HEK293 (cell line): ENCODE measurements at regions of chr7 and their contacts with region 1.

Region 1: DNA sequence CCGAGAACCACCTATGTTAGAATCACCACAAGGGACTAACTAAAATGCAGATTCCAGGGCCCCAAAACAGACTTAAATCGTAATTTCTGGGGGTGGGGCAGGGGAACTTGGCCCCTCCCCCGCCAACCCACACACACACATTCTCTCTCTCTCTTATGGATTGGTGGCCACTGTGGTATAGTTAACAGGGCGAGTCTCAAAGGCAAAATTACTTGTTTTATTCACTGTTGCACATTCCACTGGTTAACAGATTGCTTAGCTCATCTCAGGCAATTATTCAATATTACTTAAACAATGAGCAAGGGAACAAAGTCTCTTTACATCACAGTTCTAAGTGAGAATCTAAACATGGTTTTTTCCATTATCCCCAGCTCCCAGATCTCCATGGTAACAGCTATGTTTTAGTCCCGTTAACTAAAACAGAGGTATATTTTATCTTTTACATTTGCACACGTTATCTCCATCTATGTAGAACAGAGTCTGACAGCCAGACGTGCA is 38.5 kb downstream of the IGF2BP3 start:
- H3K4me3 ChIP-seq: no peak overlapping the region
- H3K27ac ChIP-seq: no peak overlapping the region; the same call in 1 of the 2 replicates
- H3K4me1 ChIP-seq: peaks cover 26% of the 10 kb centered on the region
- CTCF ChIP-seq: no peak

Region 2: GRCh38 chr7:22822486-22823141 is 609.1 kb before region 1 on chr7 and contains the start of gene TOMM7:
- CTCF ChIA-PET with region 1: no interaction called
- POLR2A ChIA-PET with region 1: no interaction called
- H3K4me3 ChIP-seq: peak within 1 kb of the TSS; percentile 60
- H3K27ac ChIP-seq: peak within 1 kb of the TSS; percentile 47; the same call in 1 of the 2 replicates
- H3K4me1 ChIP-seq: no peaks in the 10 kb centered on the region
- CTCF ChIP-seq: peak; percentile 72

Region 3: GRCh38 chr7:23335621-23336020 is 96.1 kb before region 1 on chr7:
- CTCF ChIA-PET with region 1: interaction called, 11 read pairs
- POLR2A ChIA-PET with region 1: no interaction called
- H3K4me3 ChIP-seq: no peak overlapping the region
- H3K27ac ChIP-seq: peak overlapping the region; percentile 64
- H3K4me1 ChIP-seq: peaks cover 36% of the 10 kb centered on the region
- CTCF ChIP-seq: no peak

Region 4: DNA sequence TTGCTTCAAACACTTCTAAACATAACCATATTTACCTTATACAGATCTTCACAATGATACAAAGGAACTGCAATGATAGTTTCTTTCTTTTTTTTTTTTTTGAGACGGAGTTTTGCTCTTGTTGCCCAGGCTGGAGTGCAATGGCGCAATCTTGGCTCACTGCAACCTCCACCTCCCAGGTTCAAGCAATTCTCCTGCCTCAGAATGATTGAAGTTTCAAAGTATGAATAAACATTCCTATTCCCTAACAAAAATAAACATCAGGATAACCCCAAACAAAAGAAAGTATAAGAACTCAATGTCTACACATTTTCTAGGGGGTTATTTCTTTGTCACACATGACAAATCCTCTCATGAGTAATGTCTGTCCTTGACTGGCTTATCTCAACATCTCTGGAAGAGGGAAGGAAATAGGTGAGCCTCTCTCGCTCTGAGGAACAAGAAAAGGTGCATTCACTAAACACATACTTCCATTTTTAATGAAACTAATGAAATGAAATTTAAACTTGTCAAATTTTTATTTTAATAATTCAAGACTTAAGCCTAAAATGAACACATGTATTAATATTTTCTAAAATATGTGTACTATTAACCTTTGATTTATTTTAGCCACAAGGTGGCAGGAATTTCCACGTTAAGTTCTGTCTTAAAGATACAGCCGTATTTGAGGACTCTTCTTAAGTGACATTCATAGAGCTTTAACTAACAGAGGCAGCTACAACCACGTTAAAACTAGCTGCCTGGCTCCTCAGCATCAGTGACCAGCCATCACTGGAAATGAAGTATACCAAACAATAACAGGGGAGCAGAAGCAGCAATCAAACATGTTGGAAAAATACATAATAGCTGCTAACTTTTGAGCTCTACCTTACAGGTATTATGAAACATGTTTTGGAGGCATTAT is 74.3 kb before region 1 on chr7:
- CTCF ChIA-PET with region 1: interaction called, 13 read pairs
- POLR2A ChIA-PET with region 1: no interaction called
- H3K4me3 ChIP-seq: no peak overlapping the region
- H3K27ac ChIP-seq: peak overlapping the region; percentile 54
- H3K4me1 ChIP-seq: peaks cover 27% of the 10 kb centered on the region
- CTCF ChIP-seq: no peak

Region 5: GRCh38 chr7:23394488-23395171 is 37.1 kb before region 1 on chr7:
- CTCF ChIA-PET with region 1: no interaction called
- POLR2A ChIA-PET with region 1: no interaction called
- H3K4me3 ChIP-seq: no peak overlapping the region
- H3K27ac ChIP-seq: 0 out of 2 replicates have a peak overlapping the region, but pooled peaks have one; percentile 11
- H3K4me1 ChIP-seq: peaks cover 10% of the 10 kb centered on the region
- CTCF ChIP-seq: no peak

Region 6: GRCh38 chr7:23419845-23420244 is 11.9 kb before region 1 on chr7:
- CTCF ChIA-PET with region 1: interaction called, 12 read pairs
- POLR2A ChIA-PET with region 1: no interaction called
- H3K4me3 ChIP-seq: no peak overlapping the region
- H3K27ac ChIP-seq: no peak overlapping the region
- H3K4me1 ChIP-seq: peaks cover 29% of the 10 kb centered on the region
- CTCF ChIP-seq: no peak

Region 7: DNA sequence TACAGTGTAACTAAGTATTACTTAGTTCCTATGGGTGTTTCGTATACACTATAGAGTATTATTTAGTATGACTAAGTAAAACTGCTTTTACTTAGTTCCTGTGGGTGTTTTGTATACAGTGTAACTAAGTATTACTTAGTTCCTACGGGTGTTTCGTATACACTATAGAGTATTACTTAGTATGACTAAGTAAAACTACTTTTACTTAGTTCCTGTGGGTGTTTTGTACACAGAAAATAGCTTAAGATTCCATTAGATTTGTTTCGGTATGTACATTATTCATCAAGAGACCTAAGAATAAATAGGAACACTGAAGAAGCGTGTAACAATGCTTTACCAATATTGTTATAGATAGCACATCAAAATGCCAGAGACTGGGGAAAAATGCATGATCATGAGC is 13.6 kb after region 1 on chr7:
- CTCF ChIA-PET with region 1: interaction called, 15 read pairs
- POLR2A ChIA-PET with region 1: no interaction called
- H3K4me3 ChIP-seq: no peak overlapping the region
- H3K27ac ChIP-seq: no peak overlapping the region
- H3K4me1 ChIP-seq: peaks cover 9% of the 10 kb centered on the region
- CTCF ChIP-seq: no peak

Region 8: DNA sequence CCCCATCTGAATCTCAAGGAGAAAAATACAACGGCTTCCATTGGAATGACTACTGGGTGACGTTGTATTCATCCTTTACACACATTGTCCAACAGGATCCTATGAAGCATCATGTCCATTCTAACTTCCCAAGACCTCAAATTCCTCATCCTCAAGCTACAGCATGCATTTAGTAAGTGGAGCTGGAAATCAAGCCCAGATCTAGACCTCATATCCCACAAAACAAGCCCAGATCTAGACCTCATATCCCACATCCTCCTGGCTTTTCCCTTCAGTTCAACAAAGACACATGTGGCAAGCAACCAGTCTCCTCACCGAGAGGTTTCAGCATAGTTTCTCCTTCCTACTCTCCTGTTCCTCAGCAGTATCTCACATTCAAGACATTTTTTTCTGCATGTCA is 26.3 kb after region 1 on chr7:
- CTCF ChIA-PET with region 1: interaction called, 12 read pairs
- POLR2A ChIA-PET with region 1: no interaction called
- H3K4me3 ChIP-seq: no peak overlapping the region
- H3K27ac ChIP-seq: no peak overlapping the region
- H3K4me1 ChIP-seq: peaks cover 9% of the 10 kb centered on the region
- CTCF ChIP-seq: no peak

Region 9: GRCh38 chr7:23811540-23811939 is 379.8 kb after region 1 on chr7:
- CTCF ChIA-PET with region 1: no interaction called
- POLR2A ChIA-PET with region 1: no interaction called
- H3K4me3 ChIP-seq: no peak overlapping the region
- H3K27ac ChIP-seq: no peak overlapping the region
- H3K4me1 ChIP-seq: no peaks in the 10 kb centered on the region
- CTCF ChIP-seq: no peak

Region 10: DNA sequence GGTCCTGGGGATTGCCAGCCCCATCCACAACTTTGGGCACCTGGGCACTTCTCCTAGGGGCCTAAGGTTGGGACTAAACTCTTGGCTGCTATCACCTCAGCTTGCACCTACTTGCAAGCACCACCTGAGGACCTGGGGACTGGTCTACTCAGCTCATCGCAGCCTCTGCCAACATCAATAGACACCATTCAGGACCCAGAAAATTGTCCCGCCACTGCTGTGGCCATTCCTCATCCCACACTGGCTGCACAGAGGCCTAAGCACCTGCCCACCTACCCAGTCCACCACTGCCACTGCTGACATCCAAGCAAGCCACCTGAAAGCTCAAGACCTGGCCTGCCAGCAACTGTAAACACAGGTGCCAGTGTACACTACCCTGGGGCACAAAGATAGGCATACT is 512.4 kb after region 1 on chr7:
- CTCF ChIA-PET with region 1: no interaction called
- POLR2A ChIA-PET with region 1: no interaction called
- H3K4me3 ChIP-seq: no peak overlapping the region
- H3K27ac ChIP-seq: no peak overlapping the region
- H3K4me1 ChIP-seq: no peaks in the 10 kb centered on the region
- CTCF ChIP-seq: no peak